CD8-positive, alpha-beta memory T cell (primary cell): ENCODE measurements at regions of chr1 and their contacts with region 1.

Region 1: DNA sequence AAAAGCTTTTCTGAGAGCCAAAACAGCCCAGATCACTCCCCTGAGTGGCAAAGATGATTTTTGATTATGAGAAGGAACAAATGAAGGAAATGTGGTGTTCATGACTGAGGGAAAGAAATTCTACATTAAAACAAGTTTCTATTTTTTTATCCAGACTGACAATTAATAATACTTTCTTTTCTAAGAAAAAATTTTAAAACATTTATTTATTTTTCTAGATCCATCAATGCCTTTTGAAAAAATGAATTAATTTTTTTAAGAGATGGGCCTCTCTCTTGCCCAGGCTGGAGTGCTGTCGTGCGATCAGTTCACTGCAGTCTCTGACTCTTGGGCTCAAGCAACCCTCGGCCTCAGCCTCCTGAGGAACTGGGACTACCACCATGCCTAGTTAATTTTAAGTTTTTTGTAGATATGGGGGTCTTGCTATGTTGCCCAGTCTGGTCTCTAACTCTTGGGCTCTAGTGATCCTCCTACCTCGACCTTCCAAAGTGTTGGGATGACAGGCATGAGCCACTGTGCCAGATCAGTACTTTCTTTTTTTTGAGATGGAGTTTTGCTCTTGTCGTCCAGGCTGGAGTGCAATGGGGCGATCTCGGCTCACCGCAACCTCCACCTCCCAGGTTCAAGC is 11.2 kb upstream of the TXNIP start:
- DNase-seq: no peak
- H3K4me3 ChIP-seq: no peak overlapping the region
- H3K4me3 Mint-ChIP-seq: peak overlapping the region in 6 of 7 donors; percentile 69 to 87 (median 82)
- H3K27ac ChIP-seq: no peak overlapping the region
- H3K27ac Mint-ChIP-seq: peak overlapping the region; percentile 47 to 93 (median 75)
- H3K4me1 ChIP-seq: peaks cover 33% of the 10 kb centered on the region
- H3K4me1 Mint-ChIP-seq: peaks cover 31 to 50% (median 39%) of the 10 kb centered on the region in 3 donors
- H3K27me3 ChIP-seq: no peaks in the 10 kb centered on the region
- H3K27me3 Mint-ChIP-seq: no peaks in the 10 kb centered on the region

Region 2: GRCh38 chr1:145730900-145731299 is 276.7 kb before region 1 on chr1:
- CTCF ChIA-PET with region 1: no interaction called
- POLR2A ChIA-PET with region 1: no interaction called
- DNase-seq: no peak
- H3K4me3 ChIP-seq: no peak overlapping the region
- H3K4me3 Mint-ChIP-seq: no peak overlapping the region
- H3K27ac ChIP-seq: no peak overlapping the region
- H3K27ac Mint-ChIP-seq: peak overlapping the region in 2 of 8 donors; percentile 5 to 19
- H3K4me1 ChIP-seq: no peaks in the 10 kb centered on the region
- H3K4me1 Mint-ChIP-seq: no peaks in the 10 kb centered on the region
- H3K27me3 ChIP-seq: no peaks in the 10 kb centered on the region
- H3K27me3 Mint-ChIP-seq: no peaks in the 10 kb centered on the region

Region 3: GRCh38 chr1:145804235-145805045 is 203.2 kb before region 1 on chr1:
- CTCF ChIA-PET with region 1: no interaction called
- POLR2A ChIA-PET with region 1: no interaction called
- DNase-seq: no peak
- H3K4me3 ChIP-seq: no peak overlapping the region
- H3K4me3 Mint-ChIP-seq: no peak overlapping the region
- H3K27ac ChIP-seq: no peak overlapping the region
- H3K27ac Mint-ChIP-seq: peak overlapping the region in 2 of 8 donors; percentile 48 to 70
- H3K4me1 ChIP-seq: peaks cover 10% of the 10 kb centered on the region
- H3K4me1 Mint-ChIP-seq: peaks cover 52 to 75% (median 71%) of the 10 kb centered on the region in 3 donors
- H3K27me3 ChIP-seq: no peaks in the 10 kb centered on the region
- H3K27me3 Mint-ChIP-seq: peaks cover 0 to 2% of the 10 kb centered on the region in 2 donors

Region 4: GRCh38 chr1:145891587-145892485 is 115.8 kb before region 1 on chr1:
- CTCF ChIA-PET with region 1: interaction called, 12 read pairs
- POLR2A ChIA-PET with region 1: no interaction called
- DNase-seq: peak in 4 of 5 donors; percentile 6 to 59 (median 32)
- H3K4me3 ChIP-seq: no peak overlapping the region
- H3K4me3 Mint-ChIP-seq: no peak overlapping the region
- H3K27ac ChIP-seq: no peak overlapping the region
- H3K27ac Mint-ChIP-seq: peak overlapping the region in 1 of 8 donors; percentile 83
- H3K4me1 ChIP-seq: no peaks in the 10 kb centered on the region
- H3K4me1 Mint-ChIP-seq: peaks cover 0 to 1% (median under 1%) of the 10 kb centered on the region in 3 donors
- H3K27me3 ChIP-seq: no peaks in the 10 kb centered on the region
- H3K27me3 Mint-ChIP-seq: no peaks in the 10 kb centered on the region

Region 5: DNA sequence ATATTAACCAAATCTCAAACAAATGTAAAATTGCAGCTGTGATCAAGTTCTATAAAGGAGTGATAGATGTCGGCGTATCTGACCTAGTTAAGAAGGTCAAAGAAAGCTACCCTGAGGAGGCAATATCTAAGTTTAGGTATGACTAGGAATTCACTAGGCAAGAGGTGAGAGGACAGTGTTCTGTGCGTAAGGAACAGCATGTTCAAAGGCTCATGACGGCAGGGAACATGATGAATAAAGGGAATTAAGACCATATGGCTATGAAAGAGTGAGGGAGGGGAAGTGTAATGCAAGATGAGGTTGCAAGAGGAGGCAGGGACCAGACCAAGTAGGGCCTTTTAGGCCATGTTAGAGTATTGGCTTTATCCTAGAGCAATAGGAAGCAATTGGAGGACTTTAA is 58.4 kb before region 1 on chr1:
- CTCF ChIA-PET with region 1: no interaction called
- POLR2A ChIA-PET with region 1: no interaction called
- DNase-seq: no peak
- H3K4me3 ChIP-seq: no peak overlapping the region
- H3K4me3 Mint-ChIP-seq: no peak overlapping the region
- H3K27ac ChIP-seq: no peak overlapping the region
- H3K27ac Mint-ChIP-seq: peak overlapping the region in 6 of 8 donors; percentile 6 to 81 (median 46)
- H3K4me1 ChIP-seq: peaks cover 24% of the 10 kb centered on the region
- H3K4me1 Mint-ChIP-seq: peaks cover 50 to 71% (median 68%) of the 10 kb centered on the region in 3 donors
- H3K27me3 ChIP-seq: no peaks in the 10 kb centered on the region
- H3K27me3 Mint-ChIP-seq: no peaks in the 10 kb centered on the region

Region 6: DNA sequence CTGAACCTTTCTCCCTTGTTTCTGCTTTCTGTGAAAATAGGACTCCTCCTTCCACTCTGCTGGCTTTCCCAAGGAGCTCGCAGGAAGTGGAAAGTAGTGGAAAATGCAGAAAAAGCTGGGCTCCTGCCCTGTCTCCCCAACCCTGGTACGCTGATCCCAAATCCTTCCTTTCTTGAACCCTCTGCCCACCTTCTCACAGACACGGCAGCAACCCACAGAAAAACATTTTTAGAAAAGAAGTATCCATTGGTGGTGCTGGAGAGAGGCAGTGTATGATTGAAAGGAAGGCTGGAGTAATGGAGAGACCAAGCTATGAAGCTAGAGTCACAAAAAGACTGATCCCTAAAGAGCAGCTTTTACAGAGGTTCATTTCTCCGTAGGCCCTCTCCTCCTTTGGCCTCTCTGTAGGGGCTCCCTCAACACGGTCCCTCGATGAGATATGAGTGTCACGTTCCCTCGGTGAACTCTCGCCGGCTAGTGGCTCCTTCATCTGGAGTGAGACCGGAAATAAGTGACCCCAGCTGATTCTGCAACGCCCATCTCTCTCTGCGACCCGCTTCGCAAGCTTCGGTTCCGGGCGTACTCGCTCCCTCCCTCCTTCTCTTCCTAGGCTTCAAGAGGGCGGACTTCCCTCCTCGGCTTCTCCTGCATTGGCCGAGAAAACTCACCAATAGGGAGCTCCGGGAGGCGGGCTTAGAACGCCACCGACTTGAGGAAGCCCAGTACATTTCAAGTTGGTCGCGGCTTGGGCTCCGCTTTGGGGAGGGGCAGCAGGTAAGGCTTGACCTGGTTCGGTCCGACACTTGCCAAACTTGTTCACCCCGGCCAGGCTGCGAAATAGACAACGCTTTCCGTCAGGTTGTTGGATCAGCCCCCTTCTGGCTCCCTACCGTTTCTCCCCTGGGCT is 43.4 kb before region 1 on chr1 and contains the starts of genes ANKRD34A and POLR3GL:
- CTCF ChIA-PET with region 1: interaction called, 18 read pairs
- POLR2A ChIA-PET with region 1: interaction called, 7 read pairs
- DNase-seq: peak; percentile 84 to 95 (median 90)
- H3K4me3 ChIP-seq: peak within 1 kb of the TSS; percentile 88
- H3K4me3 Mint-ChIP-seq: peak within 1 kb of the TSS; percentile 93 to 98 (median 96)
- H3K27ac ChIP-seq: peak within 1 kb of the TSS; percentile 71
- H3K27ac Mint-ChIP-seq: peak within 1 kb of the TSS; percentile 84 to 99 (median 96)
- H3K4me1 ChIP-seq: peaks cover 46% of the 10 kb centered on the region
- H3K4me1 Mint-ChIP-seq: peaks cover 51 to 72% (median 53%) of the 10 kb centered on the region in 3 donors
- H3K27me3 ChIP-seq: no peaks in the 10 kb centered on the region
- H3K27me3 Mint-ChIP-seq: peaks cover 0 to 3% of the 10 kb centered on the region in 2 donors
- total RNA-seq, gene ANKRD34A: 6.9 to 8.7 TPM
- total RNA-seq, gene POLR3GL: 21.6 to 22.8 TPM

Region 7: GRCh38 chr1:145985502-145986439 is 21.8 kb before region 1 on chr1:
- CTCF ChIA-PET with region 1: interaction called, 475 read pairs
- POLR2A ChIA-PET with region 1: interaction called, 7 read pairs
- DNase-seq: no peak
- H3K4me3 ChIP-seq: no peak overlapping the region
- H3K4me3 Mint-ChIP-seq: peak overlapping the region in 6 of 7 donors; percentile 49 to 80 (median 71)
- H3K27ac ChIP-seq: peak overlapping the region; percentile 46
- H3K27ac Mint-ChIP-seq: peak overlapping the region; percentile 86 to 99 (median 94)
- H3K4me1 ChIP-seq: peaks cover 78% of the 10 kb centered on the region
- H3K4me1 Mint-ChIP-seq: peaks cover 28 to 70% (median 29%) of the 10 kb centered on the region in 3 donors
- H3K27me3 ChIP-seq: no peaks in the 10 kb centered on the region
- H3K27me3 Mint-ChIP-seq: no peaks in the 10 kb centered on the region

Region 8: GRCh38 chr1:146019231-146020057 is 11.8 kb after region 1 on chr1:
- CTCF ChIA-PET with region 1: interaction called, 13 read pairs
- POLR2A ChIA-PET with region 1: no interaction called
- DNase-seq: no peak
- H3K4me3 ChIP-seq: no peak overlapping the region
- H3K4me3 Mint-ChIP-seq: peak overlapping the region in 5 of 7 donors; percentile 17 to 69 (median 29)
- H3K27ac ChIP-seq: no peak overlapping the region
- H3K27ac Mint-ChIP-seq: peak overlapping the region in 2 of 8 donors; percentile 11 to 49
- H3K4me1 ChIP-seq: peaks cover 8% of the 10 kb centered on the region
- H3K4me1 Mint-ChIP-seq: peaks cover 8 to 14% (median 9%) of the 10 kb centered on the region in 3 donors
- H3K27me3 ChIP-seq: peaks cover 31% of the 10 kb centered on the region
- H3K27me3 Mint-ChIP-seq: peaks cover 21 to 74% of the 10 kb centered on the region in 2 donors